HEK293 (cell line): ENCODE measurements at regions of chr12 and their contacts with region 1.

Region 1: GRCh38 chr12:49288412-49288853 is 6.5 kb upstream of the PRPH start:
- H3K4me3 ChIP-seq: no peak overlapping the region
- H3K27ac ChIP-seq: no peak overlapping the region
- H3K4me1 ChIP-seq: no peaks in the 10 kb centered on the region
- CTCF ChIP-seq: peak; percentile 89

Region 2: GRCh38 chr12:49018261-49019119 is 269.9 kb before region 1 on chr12 and contains the start of gene PRKAG1:
- CTCF ChIA-PET with region 1: no interaction called
- POLR2A ChIA-PET with region 1: no interaction called
- H3K4me3 ChIP-seq: peak within 1 kb of the TSS; percentile 95
- H3K27ac ChIP-seq: peak within 1 kb of the TSS; percentile 84
- H3K4me1 ChIP-seq: no peaks in the 10 kb centered on the region; the same call in 1 of the 2 replicates
- CTCF ChIP-seq: peak; percentile 91

Region 3: DNA sequence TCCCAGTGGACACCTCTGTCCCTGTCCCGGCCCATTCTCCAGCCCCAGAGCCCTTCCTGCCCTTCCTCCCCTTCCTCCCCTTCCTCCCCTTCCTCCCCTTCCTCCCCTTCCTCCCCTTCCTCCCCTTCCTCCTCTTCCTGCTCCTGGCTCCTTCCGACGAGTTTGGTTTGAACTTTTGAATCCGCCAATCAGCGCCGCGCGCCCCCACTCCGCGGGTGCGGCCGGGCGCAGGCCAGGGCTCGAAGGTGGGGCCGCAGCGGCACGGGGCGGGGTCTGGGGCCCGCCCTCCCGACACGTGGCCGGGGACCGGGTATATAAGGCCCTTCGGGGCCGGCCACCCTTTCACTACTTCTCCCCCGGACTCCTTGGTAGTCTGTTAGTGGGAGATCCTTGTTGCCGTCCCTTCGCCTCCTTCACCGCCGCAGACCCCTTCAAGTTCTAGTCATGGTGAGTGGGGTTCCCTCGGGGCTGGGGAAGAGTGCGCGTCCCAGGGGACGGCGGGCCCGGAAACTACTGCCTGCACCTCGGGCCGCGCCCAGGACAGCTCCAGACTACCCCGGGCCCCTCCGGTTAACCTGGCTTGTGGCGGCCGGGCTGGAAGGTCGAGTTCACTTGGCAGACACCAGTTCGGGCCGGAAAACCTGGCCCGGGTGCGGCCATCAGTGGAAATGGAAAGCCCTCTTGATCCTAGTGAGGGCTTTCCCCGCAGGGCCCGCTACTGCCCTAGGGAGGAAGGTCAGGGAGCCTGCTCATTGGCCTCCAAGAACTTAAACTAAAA is 23.5 kb before region 1 on chr12 and contains the start of gene TUBA1C:
- CTCF ChIA-PET with region 1: interaction called, 17 read pairs
- POLR2A ChIA-PET with region 1: interaction called, 7 read pairs
- H3K4me3 ChIP-seq: peak within 1 kb of the TSS; percentile 94
- H3K27ac ChIP-seq: peak within 1 kb of the TSS; percentile 84
- H3K4me1 ChIP-seq: peaks cover 5% of the 10 kb centered on the region
- CTCF ChIP-seq: 0 out of 2 replicates have a peak, but pooled peaks have one; percentile 17

Region 4: GRCh38 chr12:49322708-49323523 is 34.5 kb after region 1 on chr12 and contains the start of gene TROAP:
- CTCF ChIA-PET with region 1: interaction called, 43 read pairs
- POLR2A ChIA-PET with region 1: interaction called, 94 read pairs
- H3K4me3 ChIP-seq: peak within 1 kb of the TSS; percentile 73
- H3K27ac ChIP-seq: peak within 1 kb of the TSS; percentile 46
- H3K4me1 ChIP-seq: 0 out of 2 replicates have a peak, but pooled peaks cover 4% of the 10 kb centered on the region
- CTCF ChIP-seq: no peak

Region 5: GRCh38 chr12:49336645-49337584 is 48.5 kb after region 1 on chr12 and contains the start of gene C1QL4:
- CTCF ChIA-PET with region 1: interaction called, 185 read pairs
- POLR2A ChIA-PET with region 1: interaction called, 6 read pairs
- H3K4me3 ChIP-seq: peak within 1 kb of the TSS; percentile 49
- H3K27ac ChIP-seq: no peak within 1 kb of the TSS; the same call in 1 of the 2 replicates
- H3K4me1 ChIP-seq: peaks cover 9% of the 10 kb centered on the region; the same call in 1 of the 2 replicates
- CTCF ChIP-seq: peak; percentile 85

Region 6: GRCh38 chr12:49347384-49348237 is 59.2 kb after region 1 on chr12:
- CTCF ChIA-PET with region 1: interaction called, 79 read pairs
- POLR2A ChIA-PET with region 1: interaction called, 7 read pairs
- H3K4me3 ChIP-seq: peak overlapping the region; percentile 32
- H3K27ac ChIP-seq: peak overlapping the region; percentile 80; the same call in 1 of the 2 replicates
- H3K4me1 ChIP-seq: peaks cover 21% of the 10 kb centered on the region
- CTCF ChIP-seq: peak; percentile 97

Region 7: GRCh38 chr12:49553512-49554088 is 265.2 kb after region 1 on chr12:
- CTCF ChIA-PET with region 1: interaction called, 15 read pairs
- POLR2A ChIA-PET with region 1: no interaction called
- H3K4me3 ChIP-seq: no peak overlapping the region
- H3K27ac ChIP-seq: no peak overlapping the region
- H3K4me1 ChIP-seq: no peaks in the 10 kb centered on the region
- CTCF ChIP-seq: peak; percentile 86

Region 8: GRCh38 chr12:49673446-49674317 is 385.2 kb after region 1 on chr12:
- CTCF ChIA-PET with region 1: no interaction called
- POLR2A ChIA-PET with region 1: no interaction called
- H3K4me3 ChIP-seq: no peak overlapping the region
- H3K27ac ChIP-seq: peak overlapping the region; percentile 14; the same call in 1 of the 2 replicates
- H3K4me1 ChIP-seq: peaks cover 2% of the 10 kb centered on the region; the same call in 1 of the 2 replicates
- CTCF ChIP-seq: no peak; the same call in 1 of the 2 replicates